Activated CD4-positive, alpha-beta T cell treated with anti-CD3 and anti-CD28 coated beads for 36 hours (primary cell): ENCODE measurements at regions of chr11 and their contacts with region 1.

Region 1: GRCh38 chr11:73965076-73965860 is 14.4 kb downstream of the DNAJB13 start:
- DNase-seq: no peak
- ATAC-seq: no peak
- H3K4me3 Mint-ChIP-seq: no peak overlapping the region
- H3K27ac Mint-ChIP-seq: no peak overlapping the region
- H3K4me1 Mint-ChIP-seq: peaks cover 44% of the 10 kb centered on the region
- H3K27me3 Mint-ChIP-seq: no peaks in the 10 kb centered on the region

Region 2: DNA sequence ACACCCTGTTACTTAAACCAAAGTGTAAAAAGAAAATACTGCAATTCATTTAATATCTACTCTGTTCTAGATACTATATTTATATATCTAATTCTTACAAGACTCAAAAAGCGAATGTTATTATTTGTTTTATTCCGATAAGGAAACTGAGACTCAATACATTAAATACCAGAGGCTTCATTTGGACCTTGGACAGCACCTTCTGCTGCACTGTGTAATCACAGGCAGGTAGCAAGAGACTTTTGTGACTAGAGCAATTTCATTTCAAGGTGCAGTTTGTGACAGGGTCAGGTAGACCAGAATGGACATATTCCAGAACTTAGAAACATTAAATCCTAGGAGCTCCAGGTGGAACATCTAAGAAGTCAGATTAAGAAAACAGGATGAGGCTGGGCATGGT is 35.9 kb before region 1 on chr11:
- CTCF ChIA-PET with region 1: no interaction called
- POLR2A ChIA-PET with region 1: no interaction called
- intact Hi-C with region 1: no loop called
- DNase-seq: no peak
- ATAC-seq: no peak
- H3K4me3 Mint-ChIP-seq: no peak overlapping the region
- H3K27ac Mint-ChIP-seq: no peak overlapping the region
- H3K4me1 Mint-ChIP-seq: no peaks in the 10 kb centered on the region
- H3K27me3 Mint-ChIP-seq: no peaks in the 10 kb centered on the region

Region 3: DNA sequence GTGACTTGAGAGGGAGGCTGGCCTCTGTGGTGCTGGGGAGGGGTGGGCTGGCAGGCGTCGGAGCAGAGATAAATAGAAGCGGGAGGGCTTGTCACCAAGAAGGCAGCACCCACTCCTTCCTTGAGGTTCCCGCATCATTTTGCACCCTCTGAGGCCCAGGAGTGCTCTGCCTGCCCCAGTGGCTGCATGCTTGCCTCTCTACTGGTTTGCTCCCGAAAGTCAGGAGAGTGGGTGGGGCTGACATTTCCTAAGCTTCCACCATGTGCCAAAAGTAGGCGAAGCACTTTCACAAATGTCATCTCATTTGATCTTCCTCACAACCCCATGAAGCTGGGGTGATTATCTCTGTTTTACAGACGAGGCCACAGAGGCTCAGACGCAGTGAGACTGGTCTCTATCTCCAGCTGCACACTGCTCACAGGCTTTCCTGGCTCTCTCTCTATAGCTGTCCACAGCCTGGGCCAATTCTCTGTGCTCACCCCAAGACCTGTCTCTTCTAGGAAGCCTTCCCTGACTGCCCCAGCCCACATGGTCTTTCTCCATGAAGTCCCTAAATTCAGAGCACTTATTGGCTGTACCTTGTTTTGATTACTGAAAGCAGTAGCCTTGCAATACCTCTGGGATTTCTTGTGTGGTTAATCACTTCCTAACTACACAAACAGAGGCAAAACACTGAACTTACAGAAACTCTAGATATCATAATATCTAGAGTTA is 46.2 kb after region 1 on chr11:
- CTCF ChIA-PET with region 1: interaction called, 14 read pairs
- POLR2A ChIA-PET with region 1: interaction called, 4 read pairs
- intact Hi-C with region 1: no loop called
- DNase-seq: peak; percentile 73
- ATAC-seq: peak; percentile 78
- H3K4me3 Mint-ChIP-seq: no peak overlapping the region
- H3K27ac Mint-ChIP-seq: peak overlapping the region; percentile 83
- H3K4me1 Mint-ChIP-seq: peaks cover 83% of the 10 kb centered on the region
- H3K27me3 Mint-ChIP-seq: no peaks in the 10 kb centered on the region

Region 4: GRCh38 chr11:74085542-74085892 is 120.2 kb after region 1 on chr11:
- CTCF ChIA-PET with region 1: no interaction called
- POLR2A ChIA-PET with region 1: no interaction called
- intact Hi-C with region 1: loop called (anchors 1 to 5 kb)
- DNase-seq: no peak
- ATAC-seq: peak; percentile 42
- H3K4me3 Mint-ChIP-seq: no peak overlapping the region
- H3K27ac Mint-ChIP-seq: peak overlapping the region; percentile 56
- H3K4me1 Mint-ChIP-seq: no peaks in the 10 kb centered on the region
- H3K27me3 Mint-ChIP-seq: no peaks in the 10 kb centered on the region

Region 5: DNA sequence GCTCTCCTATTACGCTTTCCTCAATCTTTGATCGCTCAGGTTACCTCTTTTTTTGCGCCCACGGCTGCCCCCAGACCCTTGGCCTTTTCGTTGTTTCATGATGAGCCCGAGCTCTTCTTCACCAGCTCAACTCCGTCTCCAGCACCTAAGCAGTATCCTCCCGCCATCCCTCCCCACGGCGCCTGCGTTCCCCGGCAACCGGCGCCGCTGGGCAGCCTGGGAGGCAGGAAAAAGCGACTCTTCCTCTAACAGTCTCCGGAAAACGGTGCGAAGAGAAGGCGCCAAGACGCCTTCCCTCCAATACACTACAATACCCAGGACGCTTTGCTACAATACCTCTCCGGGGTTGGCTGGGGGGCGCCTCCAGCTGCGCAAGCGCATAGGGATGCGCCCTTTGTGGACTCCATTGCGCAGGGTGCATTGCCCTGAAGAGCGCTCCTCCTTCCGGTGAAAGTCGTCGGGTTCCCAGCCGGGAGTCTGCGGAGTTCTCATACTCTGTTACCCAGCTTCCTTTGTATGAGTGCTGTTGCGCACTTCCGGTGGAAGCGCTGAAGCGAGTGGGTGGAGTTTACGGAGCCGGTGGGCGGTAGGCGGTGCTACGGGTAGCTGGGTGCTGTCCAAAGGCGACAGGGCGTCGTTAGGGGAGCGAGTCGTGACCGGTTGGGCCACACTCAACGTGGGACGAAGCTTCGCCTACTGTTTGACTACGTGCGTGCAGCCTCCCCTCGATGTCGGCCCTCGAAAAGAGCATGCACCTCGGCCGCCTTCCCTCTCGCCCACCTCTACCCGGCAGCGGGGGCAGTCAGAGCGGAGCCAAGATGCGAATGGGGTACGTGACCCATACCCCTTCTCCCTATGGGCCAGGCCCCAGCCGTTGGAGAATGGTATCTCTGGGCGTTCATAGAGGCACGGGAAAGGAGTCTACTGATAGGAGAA is 205.7 kb after region 1 on chr11 and contains the starts of genes C2CD3 and PPME1:
- CTCF ChIA-PET with region 1: interaction called, 3 read pairs
- POLR2A ChIA-PET with region 1: interaction called, 3 read pairs
- intact Hi-C with region 1: loop called in 1 of 2 experiments (anchors 1 kb)
- DNase-seq: peak; percentile 98
- ATAC-seq: peak; percentile 96
- H3K4me3 Mint-ChIP-seq: no peak within 1 kb of the TSS
- H3K27ac Mint-ChIP-seq: no peak within 1 kb of the TSS
- H3K4me1 Mint-ChIP-seq: peaks cover 16% of the 10 kb centered on the region
- H3K27me3 Mint-ChIP-seq: no peaks in the 10 kb centered on the region
- total RNA-seq, gene C2CD3: 23.9 to 28.0 TPM
- total RNA-seq, gene PPME1: 54.2 to 61.5 TPM

Region 6: GRCh38 chr11:74307434-74307833 is 342.2 kb after region 1 on chr11:
- CTCF ChIA-PET with region 1: no interaction called
- POLR2A ChIA-PET with region 1: no interaction called
- intact Hi-C with region 1: loop called in 1 of 2 experiments (anchors 10 kb)
- DNase-seq: no peak
- ATAC-seq: no peak
- H3K4me3 Mint-ChIP-seq: no peak overlapping the region
- H3K27ac Mint-ChIP-seq: no peak overlapping the region
- H3K4me1 Mint-ChIP-seq: peaks cover 7% of the 10 kb centered on the region
- H3K27me3 Mint-ChIP-seq: peaks cover 38% of the 10 kb centered on the region

Region 7: DNA sequence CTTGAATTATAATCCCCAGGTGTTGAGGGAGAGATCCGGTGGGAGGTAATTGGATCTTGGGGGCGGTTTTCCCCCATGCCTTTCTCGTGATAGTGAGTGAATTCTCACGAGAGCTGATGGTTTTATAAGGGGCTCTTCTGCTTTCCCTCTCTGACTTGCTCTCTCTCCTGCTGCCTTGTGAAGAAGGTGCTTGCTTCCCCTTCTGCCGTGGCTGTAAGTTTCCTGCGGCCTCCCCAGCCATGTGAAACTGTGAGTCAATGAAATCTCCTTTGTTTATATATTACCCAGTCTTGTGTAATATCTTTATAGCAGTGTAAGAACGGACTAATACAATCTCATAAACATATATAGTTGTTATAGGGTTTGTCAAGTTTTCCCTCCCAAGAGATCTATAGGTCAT is 469.3 kb after region 1 on chr11:
- CTCF ChIA-PET with region 1: no interaction called
- POLR2A ChIA-PET with region 1: no interaction called
- intact Hi-C with region 1: no loop called
- DNase-seq: no peak
- ATAC-seq: no peak
- H3K4me3 Mint-ChIP-seq: no peak overlapping the region
- H3K27ac Mint-ChIP-seq: no peak overlapping the region
- H3K4me1 Mint-ChIP-seq: peaks cover 4% of the 10 kb centered on the region
- H3K27me3 Mint-ChIP-seq: no peaks in the 10 kb centered on the region